GM23248 (cell line): ENCODE measurements at regions of chr12 and their contacts with region 1.

Region 1: GRCh38 chr12:47032644-47033043 is 46.8 kb upstream of the PCED1B start:
- DNase-seq: peak; percentile 81
- H3K4me3 ChIP-seq: no peak overlapping the region
- H3K27ac ChIP-seq: no peak overlapping the region
- H3K4me1 ChIP-seq: peaks cover 8% of the 10 kb centered on the region
- H3K27me3 ChIP-seq: no peaks in the 10 kb centered on the region

Region 2: DNA sequence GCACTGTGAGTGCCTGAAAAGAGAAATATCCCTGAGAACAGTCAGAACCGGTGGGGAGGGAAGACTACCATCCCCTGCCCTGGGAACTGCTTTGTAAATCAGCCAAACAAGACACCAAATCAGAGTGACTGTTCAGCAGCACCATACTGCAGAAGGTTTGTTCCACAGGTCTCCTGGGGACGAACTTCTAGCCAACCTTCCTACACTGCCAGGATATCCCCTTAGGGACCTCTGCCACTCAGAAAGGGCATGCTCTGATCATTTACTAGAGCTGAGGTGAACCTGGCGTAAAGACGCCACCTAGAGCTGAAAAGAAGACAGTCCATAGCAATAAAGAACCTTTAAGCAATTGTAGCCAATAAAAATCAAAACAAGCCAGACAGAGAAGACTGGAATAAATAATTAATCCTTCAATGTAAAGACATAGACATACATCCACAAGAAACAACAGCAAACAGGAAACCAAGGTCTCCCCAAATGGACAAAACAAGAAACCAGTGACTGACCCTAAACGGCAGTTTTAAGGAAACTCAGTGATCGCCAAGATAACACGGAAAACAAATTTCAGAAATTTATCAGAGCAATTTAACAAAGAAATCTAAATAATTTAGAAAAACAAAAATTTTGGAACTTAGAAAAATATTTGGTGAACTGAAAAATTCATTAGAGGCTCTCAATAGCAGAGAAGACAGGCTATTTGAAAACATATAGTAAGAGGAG is 275.2 kb after region 1 on chr12:
- in situ Hi-C with region 1: loop called (anchors 10 kb)
- DNase-seq: peak; percentile 70
- H3K4me3 ChIP-seq: no peak overlapping the region
- H3K27ac ChIP-seq: no peak overlapping the region
- H3K4me1 ChIP-seq: no peaks in the 10 kb centered on the region
- H3K27me3 ChIP-seq: no peaks in the 10 kb centered on the region

Region 3: GRCh38 chr12:47657565-47657964 is 624.9 kb after region 1 on chr12:
- in situ Hi-C with region 1: loop called (anchors 10 kb)
- DNase-seq: no peak
- H3K4me3 ChIP-seq: no peak overlapping the region
- H3K27ac ChIP-seq: no peak overlapping the region
- H3K4me1 ChIP-seq: peaks cover 3% of the 10 kb centered on the region; the same call in 1 of the 2 replicates
- H3K27me3 ChIP-seq: no peaks in the 10 kb centered on the region